GM23248 (cell line): ENCODE measurements at regions of chr7 and their contacts with region 1.

Region 1: GRCh38 chr7:22569586-22570321 is 69.8 kb upstream of the STEAP1B start:
- DNase-seq: no peak
- H3K4me3 ChIP-seq: no peak overlapping the region
- H3K27ac ChIP-seq: no peak overlapping the region
- H3K4me1 ChIP-seq: peaks cover 38% of the 10 kb centered on the region
- H3K27me3 ChIP-seq: no peaks in the 10 kb centered on the region

Region 2: GRCh38 chr7:22319424-22320403 is 250.0 kb before region 1 on chr7:
- in situ Hi-C with region 1: no loop called
- DNase-seq: no peak
- H3K4me3 ChIP-seq: no peak overlapping the region
- H3K27ac ChIP-seq: no peak overlapping the region
- H3K4me1 ChIP-seq: 0 out of 2 replicates have a peak, but pooled peaks cover 6% of the 10 kb centered on the region
- H3K27me3 ChIP-seq: no peaks in the 10 kb centered on the region

Region 3: DNA sequence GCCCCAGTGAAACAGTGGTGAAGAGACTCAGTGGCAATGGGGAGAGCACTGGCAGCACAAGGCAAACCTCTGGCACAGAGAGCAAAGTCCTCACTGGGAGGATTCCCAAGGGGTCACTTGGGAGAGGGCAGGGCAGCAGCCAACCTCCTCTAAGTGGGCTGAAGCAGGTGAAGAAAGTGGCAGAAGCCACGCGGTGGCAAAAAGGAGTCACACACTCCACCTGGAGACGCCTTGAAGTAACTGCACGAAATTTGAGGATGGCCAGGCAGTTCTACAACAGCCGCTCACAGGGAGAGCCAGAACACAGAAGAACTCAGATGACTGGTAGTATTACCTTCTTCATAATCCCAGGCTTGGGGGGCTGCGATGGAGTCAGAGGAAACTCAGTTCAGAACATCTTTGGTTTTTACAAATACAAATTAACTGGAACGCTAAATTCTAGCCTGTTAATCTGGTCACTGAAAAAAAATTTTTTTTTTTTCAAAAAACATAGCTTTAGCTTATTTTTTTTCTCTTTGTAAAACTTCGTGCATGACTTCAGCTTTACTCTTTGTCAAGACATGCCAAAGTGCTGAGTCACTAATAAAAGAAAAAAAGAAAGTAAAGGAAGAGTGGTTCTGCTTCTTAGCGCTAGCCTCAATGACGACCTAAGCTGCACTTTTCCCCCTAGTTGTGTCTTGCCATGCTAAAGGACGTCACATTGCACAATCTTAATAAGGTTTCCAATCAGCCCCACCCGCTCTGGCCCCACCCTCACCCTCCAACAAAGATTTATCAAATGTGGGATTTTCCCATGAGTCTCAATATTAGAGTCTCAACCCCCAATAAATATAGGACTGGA is 156.8 kb after region 1 on chr7:
- in situ Hi-C with region 1: loop called (anchors 5 kb)
- DNase-seq: peak; percentile 97
- H3K4me3 ChIP-seq: peak overlapping the region; percentile 78
- H3K27ac ChIP-seq: peak overlapping the region; percentile 94
- H3K4me1 ChIP-seq: peaks cover 59% of the 10 kb centered on the region
- H3K27me3 ChIP-seq: no peaks in the 10 kb centered on the region